Activated T-helper 2 cell treated with anti-CD3 and anti-CD28 coated beads, Interferon-gamma antibody, Interleukin-2, Interleukin-4, amounts not matched to agents 10 μg/mL and 5 μg/mL and 100 μg/mL, durations not matched to agents 14 hours and 24 hours and 36 hours (primary cell): ENCODE measurements at regions of chr3 and their contacts with region 1.

Region 1: DNA sequence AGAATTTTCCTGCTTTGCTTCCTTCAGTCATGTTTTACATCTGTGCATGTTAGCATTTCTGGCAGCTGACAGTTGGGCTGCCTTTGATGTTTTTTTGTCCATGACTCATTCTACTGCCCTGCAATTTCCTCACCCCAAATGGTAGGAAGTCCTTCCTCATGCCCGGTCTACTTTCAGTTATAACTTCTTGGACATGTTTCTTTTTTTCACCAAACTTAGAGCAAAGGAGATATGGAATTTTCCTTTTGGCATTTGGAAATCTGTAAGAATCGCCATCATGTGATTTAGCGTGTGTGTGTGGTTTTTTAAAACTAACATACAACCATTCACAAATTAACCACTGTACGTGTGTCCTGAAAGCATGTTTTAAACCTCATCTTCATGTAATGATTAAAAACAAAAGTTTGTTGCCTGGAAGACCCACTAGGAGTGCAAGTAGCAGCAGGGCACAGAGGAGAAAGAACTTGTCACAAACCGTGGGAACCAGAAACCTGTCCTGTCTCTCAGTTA is 430.7 kb upstream of the CFAP20DC start:
- DNase-seq: no peak
- H3K4me3 Mint-ChIP-seq: peak overlapping the region; percentile 54
- H3K27ac Mint-ChIP-seq: peak overlapping the region; percentile 78
- H3K4me1 Mint-ChIP-seq: peaks cover 24% of the 10 kb centered on the region
- H3K27me3 Mint-ChIP-seq: no peaks in the 10 kb centered on the region

Region 2: GRCh38 chr3:59313365-59313764 is 167.2 kb before region 1 on chr3:
- intact Hi-C with region 1: loop called (anchors 10 kb)
- DNase-seq: peak; percentile 15
- H3K4me3 Mint-ChIP-seq: no peak overlapping the region
- H3K27ac Mint-ChIP-seq: no peak overlapping the region
- H3K4me1 Mint-ChIP-seq: peaks cover 8% of the 10 kb centered on the region
- H3K27me3 Mint-ChIP-seq: peaks cover 3% of the 10 kb centered on the region

Region 3: DNA sequence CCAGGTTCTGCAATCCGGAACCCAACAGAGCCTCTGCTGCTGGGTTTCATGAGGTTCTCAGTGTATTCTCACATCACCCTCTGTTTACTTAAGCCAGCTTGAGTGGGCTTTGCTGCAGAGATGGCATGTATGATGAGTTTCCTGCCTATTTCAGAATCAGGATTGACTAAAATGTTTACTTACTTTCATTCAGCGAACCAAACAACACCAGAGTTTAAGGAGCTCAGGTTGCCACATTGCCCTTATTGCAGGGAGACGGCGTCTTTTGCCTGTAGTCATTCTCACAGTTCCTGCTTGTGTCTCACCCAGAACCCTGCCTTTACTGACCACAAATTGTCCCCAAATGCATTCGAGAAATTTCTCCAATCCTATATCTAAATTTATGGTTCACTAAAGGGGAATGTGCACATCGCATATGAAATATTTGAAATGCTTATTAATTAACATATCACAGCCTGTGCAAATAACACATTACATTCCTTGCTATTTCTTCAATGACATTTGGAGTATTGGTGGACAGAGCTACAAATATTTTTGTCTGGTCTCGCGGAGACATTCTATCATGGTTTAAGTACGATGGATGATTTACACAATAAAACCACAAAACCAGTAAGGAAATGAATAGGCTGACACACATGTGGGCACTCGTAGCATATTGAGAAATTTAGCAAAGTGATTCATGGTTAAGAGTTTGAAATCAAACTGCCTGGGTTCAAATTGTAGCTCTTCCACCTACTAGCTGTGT is 53.5 kb before region 1 on chr3:
- intact Hi-C with region 1: loop called (anchors 2 kb)
- DNase-seq: no peak
- H3K4me3 Mint-ChIP-seq: no peak overlapping the region
- H3K27ac Mint-ChIP-seq: peak overlapping the region; percentile 46
- H3K4me1 Mint-ChIP-seq: peaks cover 46% of the 10 kb centered on the region
- H3K27me3 Mint-ChIP-seq: no peaks in the 10 kb centered on the region

Region 4: DNA sequence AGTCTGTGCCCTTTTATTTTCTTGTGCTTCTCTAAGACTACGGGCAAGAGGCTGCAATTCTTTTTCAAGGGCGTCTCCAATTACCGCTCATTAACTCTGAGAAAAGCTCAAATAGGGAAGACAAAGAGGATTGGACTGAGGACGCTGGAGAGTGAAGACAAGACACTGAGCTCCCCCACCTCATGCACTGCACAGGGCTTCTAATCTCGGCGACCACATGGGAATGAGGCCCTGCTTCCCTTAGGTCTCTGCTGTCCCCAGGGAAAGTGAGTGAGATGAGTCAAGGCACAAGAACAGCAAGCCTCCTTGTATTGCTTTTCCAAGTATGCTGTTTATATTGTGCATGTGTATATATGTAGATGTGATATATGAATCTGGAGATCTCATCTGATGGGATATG is 38.5 kb before region 1 on chr3:
- intact Hi-C with region 1: no loop called
- DNase-seq: no peak
- H3K4me3 Mint-ChIP-seq: no peak overlapping the region
- H3K27ac Mint-ChIP-seq: no peak overlapping the region
- H3K4me1 Mint-ChIP-seq: peaks cover 39% of the 10 kb centered on the region
- H3K27me3 Mint-ChIP-seq: no peaks in the 10 kb centered on the region

Region 5: DNA sequence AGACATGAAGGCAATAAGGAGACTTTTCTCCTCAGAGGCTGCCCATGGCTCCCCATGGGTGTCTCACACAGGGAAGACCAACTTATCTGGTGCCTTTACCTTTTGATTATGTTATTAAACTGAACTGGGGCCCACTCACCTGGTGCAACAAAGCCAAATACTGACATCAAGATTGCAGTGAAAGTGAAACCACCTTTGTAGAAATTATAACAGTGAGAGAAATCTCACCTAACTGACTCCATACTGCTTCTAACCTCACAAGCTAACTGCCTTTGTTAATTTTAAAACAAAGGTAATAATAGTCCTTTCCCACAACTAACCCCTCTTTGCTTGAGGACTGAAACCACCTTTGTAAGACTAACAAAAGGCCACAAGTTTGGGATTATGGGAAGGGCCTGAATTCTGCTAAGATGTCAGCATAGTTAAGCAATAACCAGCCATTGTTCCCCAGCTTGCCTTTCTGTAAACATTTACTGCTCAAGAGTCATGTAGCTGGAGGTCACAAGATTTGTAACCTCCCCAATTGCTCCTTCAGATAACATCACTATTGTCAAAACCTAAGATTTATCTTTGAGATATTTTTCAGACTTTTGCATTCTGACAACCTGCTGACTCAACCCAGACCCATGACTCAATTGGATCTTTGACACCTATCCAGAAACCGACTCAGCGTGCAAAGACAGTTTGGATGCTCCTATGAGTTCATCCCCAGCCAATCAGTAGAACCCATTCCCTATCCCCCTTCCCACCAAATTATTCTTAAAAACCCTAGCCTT is 10.4 kb before region 1 on chr3:
- intact Hi-C with region 1: loop called (anchors 1 kb)
- DNase-seq: peak; percentile 23
- H3K4me3 Mint-ChIP-seq: no peak overlapping the region
- H3K27ac Mint-ChIP-seq: peak overlapping the region; percentile 40
- H3K4me1 Mint-ChIP-seq: peaks cover 43% of the 10 kb centered on the region
- H3K27me3 Mint-ChIP-seq: no peaks in the 10 kb centered on the region

Region 6: DNA sequence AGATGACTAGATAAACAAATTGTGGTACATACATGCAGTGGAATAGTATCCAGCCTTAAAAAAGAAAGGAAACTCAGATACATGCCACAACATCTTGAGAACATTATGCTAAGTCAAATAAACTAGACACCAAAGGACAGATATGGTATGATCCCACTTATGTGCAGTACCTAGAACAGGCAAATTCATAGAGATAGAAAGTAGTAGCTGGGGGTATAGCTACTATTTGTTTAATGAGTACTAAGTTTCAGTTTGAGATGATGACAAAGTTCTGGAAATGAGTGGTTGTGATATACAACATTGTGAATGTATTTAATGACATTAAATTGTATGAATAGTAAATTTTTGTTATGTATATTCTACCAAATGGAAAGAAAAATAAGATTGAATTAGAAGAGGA is 46.5 kb after region 1 on chr3:
- intact Hi-C with region 1: loop called (anchors 5 kb)
- DNase-seq: no peak
- H3K4me3 Mint-ChIP-seq: no peak overlapping the region
- H3K27ac Mint-ChIP-seq: peak overlapping the region; percentile 40
- H3K4me1 Mint-ChIP-seq: peaks cover 14% of the 10 kb centered on the region
- H3K27me3 Mint-ChIP-seq: no peaks in the 10 kb centered on the region